ENCODE measurements at regions of chrX and their contacts with region 1.

Region 1: GRCh38 chrX:86946569-86946968 is 571.0 kb upstream of the KLHL4 start:
- DNase-seq: peak; percentile 33
- H3K4me3 ChIP-seq: no peak overlapping the region
- H3K27ac ChIP-seq: no peak overlapping the region
- H3K4me1 ChIP-seq: no peaks in the 10 kb centered on the region
- CTCF ChIP-seq: peak; percentile 75

Region 2: GRCh38 chrX:85611926-85612325 is 1334.6 kb before region 1 on chrX:
- CTCF ChIA-PET with region 1: no interaction called
- POLR2A ChIA-PET with region 1: no interaction called
- intact Hi-C with region 1: loop called (anchors 10 kb)
- DNase-seq: peak; percentile 1
- H3K4me3 ChIP-seq: no peak overlapping the region
- H3K27ac ChIP-seq: no peak overlapping the region
- H3K4me1 ChIP-seq: no peaks in the 10 kb centered on the region
- CTCF ChIP-seq: peak; percentile 68

Region 3: DNA sequence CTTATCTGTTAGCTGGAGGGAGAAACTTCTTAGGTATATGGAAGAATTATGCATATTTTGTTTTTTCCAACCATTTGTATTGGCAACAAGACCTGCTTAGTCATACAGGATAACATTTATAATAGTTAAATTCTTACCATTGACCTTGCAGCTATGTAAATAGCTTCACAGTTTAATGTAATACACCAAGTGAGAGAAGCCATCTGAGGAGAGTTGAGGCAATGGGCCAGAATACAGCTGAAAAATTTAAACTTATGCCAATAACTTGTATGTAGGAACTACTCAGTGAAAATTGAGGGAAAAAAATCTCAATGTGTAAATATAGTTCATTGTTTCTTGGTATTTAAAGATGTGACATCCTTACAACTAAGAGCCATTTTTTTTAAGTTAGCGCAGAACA is 524.8 kb before region 1 on chrX:
- CTCF ChIA-PET with region 1: no interaction called
- POLR2A ChIA-PET with region 1: no interaction called
- intact Hi-C with region 1: loop called (anchors 10 kb)
- DNase-seq: no peak
- H3K4me3 ChIP-seq: no peak overlapping the region
- H3K27ac ChIP-seq: no peak overlapping the region
- H3K4me1 ChIP-seq: no peaks in the 10 kb centered on the region
- CTCF ChIP-seq: no peak